ENCODE measurements at regions of chr5 and their contacts with region 1.

Region 1: DNA sequence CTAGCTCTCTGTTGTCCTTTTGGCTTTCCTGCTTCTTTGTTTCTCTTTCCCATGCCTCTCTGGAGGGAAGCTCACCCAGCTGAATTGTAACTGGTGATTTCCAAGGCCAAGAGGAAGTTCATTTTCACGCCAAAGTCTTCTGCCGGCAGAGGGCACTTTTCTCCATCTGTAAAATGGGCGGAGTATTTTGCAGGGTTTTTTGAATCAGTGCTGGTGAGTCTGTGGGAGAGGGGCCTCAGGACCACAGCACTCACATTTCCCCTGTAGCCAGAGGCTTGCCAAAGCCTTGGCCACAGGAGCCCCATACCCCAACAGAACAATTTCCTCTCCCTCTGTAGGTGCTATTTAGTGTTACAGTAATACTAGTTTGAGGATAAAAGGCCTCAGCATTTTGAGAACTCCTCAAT is 42.3 kb upstream of the MATR3 start:
- DNase-seq: peak; percentile 57
- ATAC-seq: peak; percentile 23
- H3K4me3 Mint-ChIP-seq: no peak overlapping the region
- H3K27ac Mint-ChIP-seq: no peak overlapping the region
- H3K4me1 Mint-ChIP-seq: peaks cover 22% of the 10 kb centered on the region
- H3K27me3 Mint-ChIP-seq: peaks cover 2% of the 10 kb centered on the region

Region 2: GRCh38 chr5:139262742-139263445 is 11.6 kb after region 1 on chr5:
- CTCF ChIA-PET with region 1: interaction called, 13 read pairs
- POLR2A ChIA-PET with region 1: no interaction called
- DNase-seq: peak; percentile 83
- ATAC-seq: peak; percentile 99
- H3K4me3 Mint-ChIP-seq: no peak overlapping the region
- H3K27ac Mint-ChIP-seq: no peak overlapping the region
- H3K4me1 Mint-ChIP-seq: peaks cover 20% of the 10 kb centered on the region
- H3K27me3 Mint-ChIP-seq: peaks cover 16% of the 10 kb centered on the region

Region 3: GRCh38 chr5:139708877-139709581 is 457.7 kb after region 1 on chr5:
- CTCF ChIA-PET with region 1: no interaction called
- POLR2A ChIA-PET with region 1: no interaction called
- DNase-seq: no peak
- ATAC-seq: no peak
- H3K4me3 Mint-ChIP-seq: no peak overlapping the region
- H3K27ac Mint-ChIP-seq: no peak overlapping the region
- H3K4me1 Mint-ChIP-seq: peaks cover 22% of the 10 kb centered on the region
- H3K27me3 Mint-ChIP-seq: peaks cover 15% of the 10 kb centered on the region

Measured in activated CD8-positive, alpha-beta T cell treated with anti-CD3 and anti-CD28 coated beads, Interleukin-2, amount 10 ng/mL, durations not matched to agents 7 days and 5 days (primary cell).